ENCODE measurements at regions of chr9 and their contacts with region 1.

Region 1: DNA sequence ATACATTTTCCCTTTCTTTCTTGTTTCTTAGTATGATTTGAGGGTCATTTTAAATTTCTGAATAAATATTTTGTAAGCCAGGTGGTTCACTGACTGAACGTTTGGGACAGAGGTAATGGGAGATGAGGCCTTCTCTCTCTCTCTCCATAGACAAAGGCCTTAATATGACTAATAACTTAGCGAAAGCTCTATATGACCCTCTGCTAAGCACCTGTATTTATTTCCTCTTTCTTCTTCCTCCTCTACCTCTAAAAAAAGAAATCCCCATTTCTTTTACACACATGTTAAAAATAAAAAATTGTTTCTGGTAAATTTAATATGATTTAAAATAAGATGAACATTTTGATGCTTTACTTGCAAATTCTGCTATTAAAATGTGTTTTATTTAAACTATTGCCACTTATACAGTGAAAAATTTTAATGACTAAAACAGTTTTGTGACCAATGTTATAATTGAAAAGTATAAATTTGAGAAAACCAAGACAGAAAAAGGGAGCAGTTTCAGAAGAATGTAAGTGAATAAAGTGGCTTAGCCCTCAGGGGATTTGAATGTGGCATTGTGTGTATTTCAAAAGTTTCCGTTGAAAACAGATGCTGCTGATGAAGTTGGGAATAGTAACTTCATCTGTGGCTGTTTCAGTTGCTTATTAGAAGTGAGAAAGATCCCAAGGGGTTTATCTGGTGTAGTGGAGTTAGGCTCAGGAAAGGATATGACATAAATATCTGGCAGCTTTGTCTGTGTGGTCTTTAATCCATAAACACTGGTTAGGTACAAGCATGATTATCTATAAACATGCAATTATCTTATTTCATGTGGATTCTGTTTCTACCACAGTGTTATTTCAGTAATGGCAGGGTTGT is 128.6 kb upstream of the GRHPR start:
- DNase-seq: no peak
- ATAC-seq: no peak
- H3K4me3 Mint-ChIP-seq: no peak overlapping the region
- H3K27ac Mint-ChIP-seq: peak overlapping the region; percentile 72
- H3K4me1 Mint-ChIP-seq: peaks cover 79% of the 10 kb centered on the region
- H3K27me3 Mint-ChIP-seq: no peaks in the 10 kb centered on the region

Region 2: DNA sequence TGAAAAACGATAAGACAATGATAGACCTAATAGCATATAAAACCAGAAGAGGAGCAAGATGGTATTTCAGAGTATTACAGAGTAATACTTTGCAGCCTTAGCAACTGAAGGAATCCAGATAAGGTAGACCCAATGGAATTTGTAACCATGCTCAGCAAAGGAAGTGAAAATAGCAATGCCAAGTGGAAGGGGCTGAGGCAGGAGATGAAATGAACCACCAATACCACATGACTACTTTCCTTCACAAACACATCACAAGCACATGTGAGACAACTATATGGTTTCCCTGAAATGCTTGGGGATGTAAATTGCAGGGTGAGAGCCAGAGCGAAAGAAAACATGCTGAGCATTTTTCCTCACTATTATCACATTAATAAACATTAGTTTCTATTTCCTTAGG is 801.0 kb before region 1 on chr9:
- CTCF ChIA-PET with region 1: no interaction called
- POLR2A ChIA-PET with region 1: no interaction called
- intact Hi-C with region 1: loop called (anchors 5 kb)
- DNase-seq: peak; percentile 24
- ATAC-seq: peak; percentile 70
- H3K4me3 Mint-ChIP-seq: peak overlapping the region; percentile 61
- H3K27ac Mint-ChIP-seq: peak overlapping the region; percentile 88
- H3K4me1 Mint-ChIP-seq: peaks cover 66% of the 10 kb centered on the region
- H3K27me3 Mint-ChIP-seq: no peaks in the 10 kb centered on the region

Region 3: GRCh38 chr9:37119907-37120842 is 173.7 kb before region 1 on chr9 and contains the start of gene ZCCHC7:
- CTCF ChIA-PET with region 1: no interaction called
- POLR2A ChIA-PET with region 1: no interaction called
- intact Hi-C with region 1: loop called in 1 of 2 experiments (anchors 1 kb)
- DNase-seq: peak; percentile 98
- ATAC-seq: peak; percentile 98
- H3K4me3 Mint-ChIP-seq: peak within 1 kb of the TSS; percentile 80
- H3K27ac Mint-ChIP-seq: peak within 1 kb of the TSS; percentile 96
- H3K4me1 Mint-ChIP-seq: peaks cover 31% of the 10 kb centered on the region
- H3K27me3 Mint-ChIP-seq: no peaks in the 10 kb centered on the region
- total RNA-seq, gene ZCCHC7: 29.9 to 50.2 TPM

Region 4: GRCh38 chr9:37187713-37188439 is 106.0 kb before region 1 on chr9:
- CTCF ChIA-PET with region 1: no interaction called
- POLR2A ChIA-PET with region 1: no interaction called
- intact Hi-C with region 1: loop called in 1 of 2 experiments (anchors 2 kb)
- DNase-seq: peak; percentile 30
- ATAC-seq: peak; percentile 87
- H3K4me3 Mint-ChIP-seq: peak overlapping the region; percentile 36
- H3K27ac Mint-ChIP-seq: peak overlapping the region; percentile 90
- H3K4me1 Mint-ChIP-seq: peaks cover 44% of the 10 kb centered on the region
- H3K27me3 Mint-ChIP-seq: no peaks in the 10 kb centered on the region

Region 5: DNA sequence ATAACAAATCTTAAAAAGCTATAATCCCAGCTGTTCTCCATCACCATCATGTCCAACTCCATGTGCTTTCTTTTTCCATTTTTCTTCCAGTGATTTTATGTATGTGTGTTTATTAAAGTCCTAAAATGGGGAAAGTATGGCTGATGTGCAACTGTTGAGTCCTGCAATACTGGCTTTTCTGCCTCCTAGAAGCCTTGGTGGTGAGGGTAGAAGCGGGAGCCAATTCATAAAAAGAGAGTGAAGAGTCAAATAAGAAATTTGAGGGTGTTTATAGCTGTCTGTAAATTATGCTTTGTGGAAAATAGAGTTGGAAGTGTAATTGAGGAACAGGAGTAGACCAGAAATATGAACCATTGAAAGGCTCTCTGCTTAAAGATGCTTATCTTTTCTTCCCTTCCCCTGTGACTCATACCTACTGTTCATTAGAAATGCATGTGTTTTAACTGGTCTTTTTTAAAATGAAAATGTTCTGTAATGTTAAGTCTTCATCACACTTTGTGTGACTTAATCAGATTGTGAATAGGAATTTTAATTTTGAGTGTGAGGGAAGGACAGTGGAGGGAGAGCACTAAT is 93.4 kb before region 1 on chr9:
- CTCF ChIA-PET with region 1: no interaction called
- POLR2A ChIA-PET with region 1: no interaction called
- intact Hi-C with region 1: loop called in 1 of 2 experiments (anchors 2 kb)
- DNase-seq: no peak
- ATAC-seq: peak; percentile 52
- H3K4me3 Mint-ChIP-seq: no peak overlapping the region
- H3K27ac Mint-ChIP-seq: peak overlapping the region; percentile 74
- H3K4me1 Mint-ChIP-seq: peaks cover 55% of the 10 kb centered on the region
- H3K27me3 Mint-ChIP-seq: no peaks in the 10 kb centered on the region

Region 6: GRCh38 chr9:37209431-37210386 is 84.2 kb before region 1 on chr9:
- CTCF ChIA-PET with region 1: interaction called, 3 read pairs
- POLR2A ChIA-PET with region 1: no interaction called
- intact Hi-C with region 1: loop called in 1 of 2 experiments (anchors 5 kb)
- DNase-seq: no peak
- ATAC-seq: no peak
- H3K4me3 Mint-ChIP-seq: no peak overlapping the region
- H3K27ac Mint-ChIP-seq: peak overlapping the region; percentile 7
- H3K4me1 Mint-ChIP-seq: peaks cover 36% of the 10 kb centered on the region
- H3K27me3 Mint-ChIP-seq: no peaks in the 10 kb centered on the region

Measured in activated CD4-positive, alpha-beta T cell treated with anti-CD3 and anti-CD28 coated beads for 36 hours (primary cell).